Psoas muscle (tissue), 8 donors: ENCODE measurements at regions of chr16 and their contacts with region 1.

Region 1: DNA sequence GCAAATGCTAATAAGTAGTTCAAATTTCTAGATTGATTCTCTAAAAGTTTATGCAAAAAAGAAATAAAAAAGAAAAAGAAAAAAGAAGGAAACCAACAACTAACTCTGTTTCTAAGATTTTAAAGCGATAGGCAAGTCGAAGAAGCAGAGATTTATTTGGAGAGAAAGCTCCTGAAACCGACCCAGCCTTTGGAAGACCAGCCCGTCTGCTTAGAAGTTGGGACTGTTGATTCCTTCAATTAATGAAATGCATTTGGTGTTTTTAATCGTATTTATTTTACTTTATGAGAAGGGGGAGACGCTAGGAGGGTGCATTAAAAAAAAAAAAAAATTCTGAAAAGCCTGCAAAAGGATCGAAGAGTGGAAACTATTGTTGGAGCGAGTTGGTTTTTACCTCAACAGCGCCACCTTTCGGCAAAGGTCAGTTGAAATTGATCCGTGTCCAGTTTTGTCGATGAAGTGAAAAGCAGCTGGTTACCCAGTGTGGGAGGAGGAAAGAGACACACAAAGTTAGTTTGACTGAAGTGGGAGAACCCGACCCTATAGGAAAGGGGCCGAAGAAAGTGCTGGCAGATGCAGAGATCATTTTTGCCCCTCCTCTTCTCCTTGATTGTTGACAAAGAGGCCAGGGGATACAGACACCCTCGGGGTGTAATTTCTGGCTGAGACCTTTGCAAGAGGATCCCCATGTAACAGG is 1.5 kb upstream of the MAF start:
- DNase-seq: peak; percentile 78 to 86
- ATAC-seq: peak in 3 of 4 donors; percentile 18 to 48 (median 23)
- H3K4me3 ChIP-seq: peak overlapping the region; percentile 80
- H3K27ac ChIP-seq: peak overlapping the region; percentile 94
- H3K4me1 ChIP-seq: peaks cover 13% of the 10 kb centered on the region
- H3K27me3 ChIP-seq: no peaks in the 10 kb centered on the region
- CTCF ChIP-seq: peak; percentile 79

Region 2: GRCh38 chr16:78122774-78123315 is 1479.2 kb before region 1 on chr16:
- intact Hi-C with region 1: loop called (anchors 10 kb)
- DNase-seq: peak in 1 of 2 donors; percentile 19
- ATAC-seq: peak; percentile 53 to 89 (median 64)
- H3K4me3 ChIP-seq: no peak overlapping the region
- H3K27ac ChIP-seq: no peak overlapping the region
- H3K4me1 ChIP-seq: peaks cover 10% of the 10 kb centered on the region
- H3K27me3 ChIP-seq: no peaks in the 10 kb centered on the region
- CTCF ChIP-seq: peak; percentile 61

Region 3: GRCh38 chr16:78684040-78684611 is 918.0 kb before region 1 on chr16:
- intact Hi-C with region 1: loop called in 1 of 2 experiments (anchors 5 kb)
- DNase-seq: peak; percentile 84 to 91
- ATAC-seq: peak; percentile 94 to 97 (median 96)
- H3K4me3 ChIP-seq: no peak overlapping the region
- H3K27ac ChIP-seq: peak overlapping the region; percentile 92
- H3K4me1 ChIP-seq: peaks cover 15% of the 10 kb centered on the region
- H3K27me3 ChIP-seq: no peaks in the 10 kb centered on the region
- CTCF ChIP-seq: no peak

Region 4: DNA sequence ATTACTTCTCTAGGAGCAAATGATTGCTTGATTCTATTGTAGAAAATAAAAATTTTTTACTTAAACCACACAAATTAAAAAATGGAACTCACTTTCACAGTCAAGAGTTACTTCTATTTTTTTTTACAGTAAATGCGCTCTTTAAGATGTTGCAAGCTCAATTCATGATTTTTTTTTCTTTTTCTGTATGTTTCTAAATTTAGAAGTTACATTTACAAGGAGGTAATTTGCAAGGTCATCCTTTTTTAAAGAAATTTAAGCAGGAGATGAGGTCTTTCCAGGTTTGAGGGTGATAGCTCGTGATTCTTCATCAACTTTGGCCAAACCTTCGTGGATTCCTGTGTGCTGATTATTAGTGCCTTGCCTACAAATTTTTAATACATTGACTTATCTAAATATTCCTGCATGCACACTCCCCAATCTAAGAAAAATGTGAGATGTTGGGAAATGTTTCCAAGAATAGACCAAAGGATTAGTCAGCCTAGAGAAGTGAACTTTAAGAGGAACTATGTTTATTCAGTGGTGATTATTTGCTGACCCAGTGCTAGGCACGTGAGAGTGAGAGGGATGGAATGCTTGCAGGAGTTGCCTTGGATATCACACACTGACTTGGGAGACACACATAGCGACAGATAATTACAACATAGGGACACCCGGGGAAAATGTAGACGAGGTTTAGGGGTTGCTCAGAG is 431.4 kb before region 1 on chr16:
- intact Hi-C with region 1: loop called in 1 of 2 experiments (anchors 5 kb)
- DNase-seq: peak in 1 of 2 donors; percentile 23
- ATAC-seq: no peak
- H3K4me3 ChIP-seq: no peak overlapping the region
- H3K27ac ChIP-seq: no peak overlapping the region
- H3K4me1 ChIP-seq: no peaks in the 10 kb centered on the region
- H3K27me3 ChIP-seq: no peaks in the 10 kb centered on the region
- CTCF ChIP-seq: no peak

Region 5: DNA sequence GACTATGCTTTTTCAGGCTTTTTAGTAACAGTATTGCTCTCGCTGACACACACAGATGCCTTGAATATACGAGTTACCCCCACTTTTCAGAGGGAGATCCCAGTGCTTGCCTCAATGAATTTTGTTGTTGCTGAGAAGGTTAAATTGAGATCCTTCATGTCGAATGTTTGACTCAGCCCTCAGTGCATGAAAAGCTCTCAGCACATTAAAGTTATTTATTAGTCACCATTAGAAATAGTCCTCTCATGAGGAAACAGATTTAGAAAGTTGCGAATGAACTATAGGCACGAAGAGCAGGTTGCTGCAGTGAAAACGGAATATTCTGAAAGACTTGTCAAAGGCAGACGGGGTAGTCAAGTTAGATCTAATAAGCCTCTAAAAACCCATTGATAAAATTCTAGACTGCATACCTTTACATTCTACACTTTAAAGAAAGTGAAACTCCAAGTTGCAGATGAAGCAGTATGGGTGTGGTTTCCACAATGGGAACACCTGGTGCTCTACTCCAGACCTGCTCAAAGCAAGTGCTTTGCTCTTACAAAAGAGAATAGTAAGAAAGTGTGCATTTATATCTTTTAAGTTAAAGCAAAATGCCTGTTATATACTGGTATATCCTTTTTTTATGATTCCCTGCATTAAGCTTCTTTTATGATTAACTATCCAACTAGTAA is 239.6 kb before region 1 on chr16:
- intact Hi-C with region 1: loop called in 1 of 2 experiments (anchors 5 kb)
- DNase-seq: no peak
- ATAC-seq: peak; percentile 75 to 88 (median 78)
- H3K4me3 ChIP-seq: peak overlapping the region; percentile 33
- H3K27ac ChIP-seq: peak overlapping the region; percentile 82
- H3K4me1 ChIP-seq: peaks cover 5% of the 10 kb centered on the region
- H3K27me3 ChIP-seq: no peaks in the 10 kb centered on the region
- CTCF ChIP-seq: no peak

Region 6: GRCh38 chr16:79542237-79542774 is 59.8 kb before region 1 on chr16:
- intact Hi-C with region 1: no loop called
- DNase-seq: peak; percentile 58 to 83
- ATAC-seq: peak; percentile 83 to 93 (median 88)
- H3K4me3 ChIP-seq: peak overlapping the region; percentile 37
- H3K27ac ChIP-seq: peak overlapping the region; percentile 78
- H3K4me1 ChIP-seq: peaks cover 25% of the 10 kb centered on the region
- H3K27me3 ChIP-seq: no peaks in the 10 kb centered on the region
- CTCF ChIP-seq: no peak

Region 7: DNA sequence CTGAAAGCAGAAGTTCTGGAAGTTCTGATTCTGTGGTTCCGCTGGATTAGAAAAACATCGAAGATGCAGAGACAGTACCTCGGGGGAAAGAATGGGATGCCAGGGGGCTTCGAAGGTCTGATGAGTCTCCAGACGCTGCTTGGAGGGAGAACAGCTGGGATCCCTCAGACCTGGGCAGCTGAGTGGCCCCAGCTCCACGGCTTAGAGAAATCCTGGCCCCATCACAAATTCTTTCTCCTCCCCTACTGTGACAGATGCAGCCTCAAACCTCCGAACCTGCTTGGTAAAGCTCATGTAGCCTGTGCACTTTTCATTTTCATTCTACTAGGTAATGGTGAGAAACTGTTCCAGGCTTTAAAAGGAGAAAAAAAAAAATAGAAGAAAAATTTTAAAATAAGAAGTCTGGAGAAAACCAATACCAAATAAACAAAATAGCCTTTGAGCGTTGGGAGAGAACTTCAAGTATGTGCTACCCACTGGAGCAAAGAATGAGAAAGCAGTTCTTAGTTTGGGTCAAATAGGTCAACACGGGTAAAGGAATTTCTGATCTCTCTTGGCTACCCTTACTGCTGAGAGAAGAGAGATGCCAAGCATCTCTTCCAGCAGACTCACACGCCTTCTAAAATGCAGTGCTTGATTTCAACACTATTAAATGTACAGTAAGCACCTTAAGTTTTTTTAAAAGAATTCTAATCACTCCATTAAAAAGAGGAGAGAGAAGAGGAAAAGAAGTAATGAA is 21.5 kb before region 1 on chr16:
- intact Hi-C with region 1: no loop called
- DNase-seq: no peak
- ATAC-seq: peak in 1 of 4 donors; percentile 55
- H3K4me3 ChIP-seq: no peak overlapping the region
- H3K27ac ChIP-seq: no peak overlapping the region
- H3K4me1 ChIP-seq: peaks cover 7% of the 10 kb centered on the region
- H3K27me3 ChIP-seq: no peaks in the 10 kb centered on the region
- CTCF ChIP-seq: no peak

Region 8: GRCh38 chr16:79770244-79771064 is 168.4 kb after region 1 on chr16:
- intact Hi-C with region 1: loop called in 1 of 2 experiments (anchors 10 kb)
- DNase-seq: peak; percentile 90 to 94
- ATAC-seq: peak; percentile 98 to 100 (median 98)
- H3K4me3 ChIP-seq: peak overlapping the region; percentile 69
- H3K27ac ChIP-seq: peak overlapping the region; percentile 19
- H3K4me1 ChIP-seq: peaks cover 12% of the 10 kb centered on the region
- H3K27me3 ChIP-seq: no peaks in the 10 kb centered on the region
- CTCF ChIP-seq: no peak